GM12878 (cell line): ENCODE measurements at regions of chr7 and their contacts with region 1.

Region 1: DNA sequence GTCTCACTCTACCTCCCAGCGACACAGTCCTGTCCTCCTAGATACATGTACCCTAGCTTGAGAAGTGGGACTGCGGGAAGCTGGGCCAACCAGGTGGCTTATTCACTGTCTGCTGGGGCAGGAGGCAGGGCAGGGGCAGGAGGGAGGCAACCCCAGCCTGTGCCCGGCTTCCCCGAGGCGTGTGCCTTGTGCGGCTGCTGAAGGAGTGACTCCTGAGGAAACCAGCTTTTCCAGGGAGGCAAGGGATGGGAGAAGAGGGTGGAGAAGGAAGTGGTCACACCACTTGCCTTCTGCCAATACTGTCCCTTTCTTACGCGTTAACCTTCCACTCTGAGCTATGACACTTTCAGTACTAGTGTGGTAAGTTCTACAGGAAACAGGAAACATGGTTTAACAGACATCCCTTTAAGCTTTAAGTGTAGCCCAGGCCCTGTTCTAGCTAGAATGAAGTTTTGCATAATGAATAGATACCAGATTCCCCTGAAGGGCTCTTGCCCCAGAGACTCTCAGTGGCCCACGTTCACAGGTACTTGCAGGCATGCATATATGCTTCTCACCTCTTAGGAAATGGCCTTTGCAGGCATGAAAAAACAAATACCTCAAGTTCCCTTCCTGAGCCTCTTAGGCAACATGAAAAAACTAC is 40.6 kb downstream of the SYPL1 start:
- DNase-seq: peak; percentile 98
- ATAC-seq: peak; percentile 89
- H3K4me3 ChIP-seq: peak overlapping the region; percentile 67
- H3K27ac ChIP-seq: peak overlapping the region; percentile 98
- H3K4me1 ChIP-seq: peaks cover 68% of the 10 kb centered on the region
- H3K27me3 ChIP-seq: no peaks in the 10 kb centered on the region
- CTCF ChIP-seq: no peak
- EP300 ChIP-seq: peak; percentile 71 to 78; a peak in 3 of 4 replicates
- POLR2A ChIP-seq: peak; percentile 79
- RAD21 ChIP-seq: peak; percentile 18; the same call in 1 of the 2 replicates

Region 2: DNA sequence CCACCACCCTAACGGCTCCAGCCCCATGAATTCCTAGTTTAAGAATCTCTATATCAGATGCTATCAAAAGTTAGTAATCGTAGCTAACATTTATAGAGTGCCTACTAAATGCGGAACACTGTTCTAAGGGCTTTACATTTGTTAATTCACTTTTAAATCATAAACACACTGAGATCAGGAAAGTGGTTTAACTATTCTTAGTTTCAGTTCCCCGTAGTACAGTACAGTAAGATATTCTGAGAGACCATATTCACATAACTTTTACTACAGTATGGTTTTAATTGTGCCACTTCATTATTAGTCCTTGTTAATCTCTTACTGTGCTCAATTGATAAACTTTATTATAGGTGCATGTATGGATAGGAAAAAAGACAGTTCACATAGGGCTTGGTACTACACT is 18.2 kb after region 1 on chr7:
- CTCF ChIA-PET with region 1: interaction called, 24 read pairs
- POLR2A ChIA-PET with region 1: interaction called, 8 read pairs
- RAD21 ChIA-PET with region 1: interaction called, 19 read pairs
- SMC1A ChIA-PET with region 1: interaction called, 78 read pairs
- in situ Hi-C with region 1: no loop called
- intact Hi-C with region 1: loop called (anchors 2 kb)
- DNase-seq: peak; percentile 28
- ATAC-seq: peak; percentile 95
- H3K4me3 ChIP-seq: no peak overlapping the region; the same call in 1 of the 2 replicates
- H3K27ac ChIP-seq: peak overlapping the region; percentile 32; the same call in 1 of the 2 replicates
- H3K4me1 ChIP-seq: peaks cover 17% of the 10 kb centered on the region
- H3K27me3 ChIP-seq: no peaks in the 10 kb centered on the region
- CTCF ChIP-seq: no peak
- EP300 ChIP-seq: peak in 1 of 2 experiments; percentile 56; a peak in 1 of 4 replicates
- POLR2A ChIP-seq: no peak
- RAD21 ChIP-seq: no peak

Region 3: GRCh38 chr7:106094800-106095199 is 23.3 kb after region 1 on chr7:
- CTCF ChIA-PET with region 1: interaction called, 10 read pairs
- POLR2A ChIA-PET with region 1: interaction called, 8 read pairs
- RAD21 ChIA-PET with region 1: interaction called, 19 read pairs
- SMC1A ChIA-PET with region 1: interaction called, 31 read pairs
- in situ Hi-C with region 1: no loop called
- intact Hi-C with region 1: loop called (anchors 2 kb)
- DNase-seq: no peak
- ATAC-seq: peak; percentile 50
- H3K4me3 ChIP-seq: no peak overlapping the region
- H3K27ac ChIP-seq: no peak overlapping the region
- H3K4me1 ChIP-seq: peaks cover 20% of the 10 kb centered on the region
- H3K27me3 ChIP-seq: no peaks in the 10 kb centered on the region
- CTCF ChIP-seq: peak in 1 of 3 experiments; percentile 14; a peak in 1 of 6 replicates
- EP300 ChIP-seq: no peak
- POLR2A ChIP-seq: no peak
- RAD21 ChIP-seq: peak; percentile 28; the same call in 1 of the 2 replicates

Region 4: GRCh38 chr7:106100863-106101629 is 29.6 kb after region 1 on chr7:
- CTCF ChIA-PET with region 1: interaction called, 27 read pairs
- POLR2A ChIA-PET with region 1: interaction called, 4 read pairs
- RAD21 ChIA-PET with region 1: interaction called, 30 read pairs
- SMC1A ChIA-PET with region 1: interaction called, 37 read pairs
- in situ Hi-C with region 1: no loop called
- intact Hi-C with region 1: no loop called
- DNase-seq: no peak
- ATAC-seq: peak; percentile 8; the same call in 1 of the 3 replicates
- H3K4me3 ChIP-seq: 0 out of 2 replicates have a peak overlapping the region, but pooled peaks have one; percentile 9
- H3K27ac ChIP-seq: no peak overlapping the region
- H3K4me1 ChIP-seq: peaks cover 16% of the 10 kb centered on the region
- H3K27me3 ChIP-seq: no peaks in the 10 kb centered on the region
- CTCF ChIP-seq: no peak
- EP300 ChIP-seq: no peak
- POLR2A ChIP-seq: no peak
- RAD21 ChIP-seq: no peak

Region 5: DNA sequence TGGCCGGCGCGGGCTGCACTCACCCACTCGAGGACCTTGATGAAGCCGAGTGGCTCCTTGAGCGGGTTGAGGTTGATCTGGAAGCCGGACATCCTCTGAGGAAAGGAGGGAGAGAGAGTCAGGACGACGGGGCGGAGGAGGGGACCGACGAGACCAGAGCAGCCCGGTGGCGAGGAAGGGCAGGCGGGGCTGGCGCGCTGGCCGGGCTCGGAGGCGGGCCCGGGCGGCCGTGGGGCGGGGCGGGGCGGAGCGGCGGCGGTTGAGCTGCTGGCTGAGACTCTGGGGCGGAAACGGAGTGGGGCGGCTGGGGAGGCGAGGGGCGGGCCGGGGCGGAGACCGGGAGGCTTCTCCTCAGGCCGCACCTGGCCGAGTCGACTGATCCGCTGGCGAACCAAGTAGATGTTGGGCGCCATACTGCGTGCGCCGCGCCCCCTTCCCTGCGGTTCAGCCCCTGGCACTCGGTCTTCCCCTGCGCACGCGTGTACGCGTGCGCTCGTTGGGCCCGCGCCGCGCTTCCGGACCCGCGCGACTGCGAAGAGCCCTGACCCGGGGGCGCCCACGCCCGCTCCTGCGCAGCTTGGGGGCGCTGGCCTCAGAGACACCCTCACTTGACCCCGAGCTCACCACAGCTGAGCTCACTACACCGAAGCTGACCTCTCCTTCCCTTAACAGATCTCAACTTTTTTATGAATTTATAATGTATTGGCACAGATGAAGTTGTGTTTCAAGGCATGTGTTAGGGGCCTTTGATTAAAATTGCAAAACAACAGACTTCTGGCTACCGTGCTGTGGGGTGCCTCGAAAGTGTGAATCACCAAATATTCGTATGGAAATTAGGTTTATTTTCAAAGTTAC is 40.9 kb after region 1 on chr7 and contains the start of gene SYPL1:
- CTCF ChIA-PET with region 1: interaction called, 15 read pairs
- POLR2A ChIA-PET with region 1: interaction called, 56 read pairs
- RAD21 ChIA-PET with region 1: interaction called, 57 read pairs
- SMC1A ChIA-PET with region 1: interaction called, 70 read pairs
- in situ Hi-C with region 1: no loop called
- intact Hi-C with region 1: loop called (anchors 1 kb)
- DNase-seq: peak; percentile 66
- ATAC-seq: peak; percentile 88
- H3K4me3 ChIP-seq: peak within 1 kb of the TSS; percentile 83
- H3K27ac ChIP-seq: peak within 1 kb of the TSS; percentile 94
- H3K4me1 ChIP-seq: peaks cover 19% of the 10 kb centered on the region
- H3K27me3 ChIP-seq: no peaks in the 10 kb centered on the region
- CTCF ChIP-seq: peak in 2 of 3 experiments; percentile 5 to 7; a peak in 1 of 6 replicates
- EP300 ChIP-seq: 0 out of 4 replicates have a peak, but pooled peaks of 1 of the 2 experiments have one; percentile 29
- POLR2A ChIP-seq: peak; percentile 91
- RAD21 ChIP-seq: no peak
- polyA plus RNA-seq, gene SYPL1: 109 to 177 TPM

Region 6: GRCh38 chr7:106239404-106239803 is 167.9 kb after region 1 on chr7:
- CTCF ChIA-PET with region 1: no interaction called
- POLR2A ChIA-PET with region 1: no interaction called
- RAD21 ChIA-PET with region 1: no interaction called
- SMC1A ChIA-PET with region 1: no interaction called
- in situ Hi-C with region 1: no loop called
- intact Hi-C with region 1: no loop called
- DNase-seq: no peak
- ATAC-seq: no peak
- H3K4me3 ChIP-seq: no peak overlapping the region
- H3K27ac ChIP-seq: no peak overlapping the region
- H3K4me1 ChIP-seq: no peaks in the 10 kb centered on the region
- H3K27me3 ChIP-seq: no peaks in the 10 kb centered on the region
- CTCF ChIP-seq: no peak
- EP300 ChIP-seq: no peak
- POLR2A ChIP-seq: no peak
- RAD21 ChIP-seq: no peak